Activated CD8-positive, alpha-beta memory T cell treated with anti-CD3 and anti-CD28 coated beads, Interleukin-2, amount 10 ng/mL, durations not matched to agents 7 days and 5 days (primary cell): ENCODE measurements at regions of chr2 and their contacts with region 1.

Region 1: DNA sequence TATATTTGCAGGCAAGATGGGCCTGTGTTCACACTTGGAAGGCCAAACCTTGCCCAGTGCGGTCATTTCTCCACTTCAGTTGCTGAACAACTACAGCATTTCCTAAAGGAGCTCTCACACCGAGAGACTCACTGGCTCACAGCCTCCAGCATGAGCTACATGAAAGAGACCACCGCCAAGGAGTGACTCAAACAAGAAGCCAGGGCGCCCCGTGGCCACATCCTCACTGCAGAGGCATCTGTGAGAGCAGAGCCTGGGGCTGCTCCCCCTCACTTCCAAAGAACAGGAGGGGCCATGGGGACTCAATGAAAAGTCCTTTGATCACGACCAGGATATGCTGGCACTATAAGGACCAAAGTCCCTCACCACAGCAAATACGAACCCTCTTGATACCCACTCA is 50.0 kb downstream of the TMEM163 start:
- DNase-seq: peak; percentile 97
- ATAC-seq: peak; percentile 86
- H3K4me3 Mint-ChIP-seq: peak overlapping the region; percentile 31
- H3K27ac Mint-ChIP-seq: peak overlapping the region; percentile 77
- H3K4me1 Mint-ChIP-seq: peaks cover 82% of the 10 kb centered on the region
- H3K27me3 Mint-ChIP-seq: peaks cover 26% of the 10 kb centered on the region

Region 2: GRCh38 chr2:134657637-134658250 is 11.1 kb before region 1 on chr2:
- CTCF ChIA-PET with region 1: interaction called, 41 read pairs
- DNase-seq: no peak
- ATAC-seq: no peak
- H3K4me3 Mint-ChIP-seq: no peak overlapping the region
- H3K27ac Mint-ChIP-seq: no peak overlapping the region
- H3K4me1 Mint-ChIP-seq: peaks cover 18% of the 10 kb centered on the region
- H3K27me3 Mint-ChIP-seq: peaks cover 1% of the 10 kb centered on the region

Region 3: GRCh38 chr2:134679745-134680144 is 10.9 kb after region 1 on chr2:
- CTCF ChIA-PET with region 1: interaction called, 16 read pairs
- DNase-seq: peak; percentile 69
- ATAC-seq: peak; percentile 58
- H3K4me3 Mint-ChIP-seq: peak overlapping the region; percentile 45
- H3K27ac Mint-ChIP-seq: peak overlapping the region; percentile 76
- H3K4me1 Mint-ChIP-seq: peaks cover 73% of the 10 kb centered on the region
- H3K27me3 Mint-ChIP-seq: peaks cover 9% of the 10 kb centered on the region